ENCODE measurements at regions of chr14 and their contacts with region 1.

Region 1: GRCh38 chr14:64800000-64800399 is 79.7 kb downstream of the SPTB start:
- DNase-seq: peak; percentile 53 to 62
- ATAC-seq: peak; percentile 30 to 71; a peak in 4 of 6 replicates
- H3K4me3 ChIP-seq: no peak overlapping the region
- H3K27ac ChIP-seq: peak overlapping the region; percentile 15 to 32; a peak in 1 of 6 replicates
- H3K4me1 ChIP-seq: peaks cover 17% of the 10 kb centered on the region
- CTCF ChIP-seq: peak; percentile 55
- EP300 ChIP-seq: no peak
- POLR2A ChIP-seq: no peak
- RAD21 ChIP-seq: peak in 1 of 2 experiments; percentile 30; a peak in 2 of 5 replicates

Region 2: GRCh38 chr14:64671591-64671990 is 128.4 kb before region 1 on chr14:
- CTCF ChIA-PET with region 1: interaction called, 12 read pairs
- POLR2A ChIA-PET with region 1: no interaction called
- DNase-seq: peak; percentile 72 to 80
- ATAC-seq: peak; percentile 74 to 87; a peak in 5 of 6 replicates
- H3K4me3 ChIP-seq: no peak overlapping the region
- H3K27ac ChIP-seq: peak overlapping the region; percentile 75 to 79
- H3K4me1 ChIP-seq: peaks cover 37% of the 10 kb centered on the region
- CTCF ChIP-seq: peak; percentile 87
- EP300 ChIP-seq: no peak
- POLR2A ChIP-seq: no peak
- RAD21 ChIP-seq: peak; percentile 94

Region 3: DNA sequence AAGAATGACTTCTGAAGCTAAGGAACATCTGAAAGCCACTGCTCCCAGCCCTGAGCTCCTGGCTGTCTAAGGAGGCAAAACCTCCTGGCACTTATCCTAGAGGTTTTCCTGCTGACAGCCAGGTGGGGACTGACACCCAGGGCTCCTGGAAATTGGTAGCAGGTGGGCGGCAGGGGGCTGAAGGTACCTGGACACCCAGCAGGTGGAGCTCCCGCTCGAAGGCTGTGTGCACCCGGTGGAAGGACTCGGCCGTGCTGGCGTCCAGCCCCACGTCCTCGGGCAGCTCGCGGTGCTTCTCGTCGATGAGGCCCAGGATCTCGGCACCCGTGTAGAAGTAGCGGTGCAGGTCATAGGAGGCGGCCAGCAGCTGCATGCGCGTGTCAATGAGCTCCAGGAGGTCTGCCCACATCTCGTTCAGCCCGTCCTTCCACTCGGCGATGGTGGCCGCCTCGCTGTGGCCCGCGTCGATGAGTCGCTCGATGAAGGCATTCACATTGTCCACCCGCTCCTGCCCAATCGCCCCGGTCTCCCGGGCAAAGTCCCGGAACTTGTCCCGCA is 27.5 kb before region 1 on chr14:
- CTCF ChIA-PET with region 1: interaction called, 88 read pairs
- POLR2A ChIA-PET with region 1: interaction called, 3 read pairs
- DNase-seq: no peak
- ATAC-seq: peak in 1 of 2 experiments; percentile 54; a peak in 2 of 6 replicates
- H3K4me3 ChIP-seq: no peak overlapping the region
- H3K27ac ChIP-seq: no peak overlapping the region
- H3K4me1 ChIP-seq: no peaks in the 10 kb centered on the region
- CTCF ChIP-seq: peak; percentile 18; the same call in 1 of the 3 replicates
- EP300 ChIP-seq: no peak
- POLR2A ChIP-seq: no peak
- RAD21 ChIP-seq: peak in 1 of 2 experiments; percentile 21; a peak in 1 of 5 replicates

Region 4: DNA sequence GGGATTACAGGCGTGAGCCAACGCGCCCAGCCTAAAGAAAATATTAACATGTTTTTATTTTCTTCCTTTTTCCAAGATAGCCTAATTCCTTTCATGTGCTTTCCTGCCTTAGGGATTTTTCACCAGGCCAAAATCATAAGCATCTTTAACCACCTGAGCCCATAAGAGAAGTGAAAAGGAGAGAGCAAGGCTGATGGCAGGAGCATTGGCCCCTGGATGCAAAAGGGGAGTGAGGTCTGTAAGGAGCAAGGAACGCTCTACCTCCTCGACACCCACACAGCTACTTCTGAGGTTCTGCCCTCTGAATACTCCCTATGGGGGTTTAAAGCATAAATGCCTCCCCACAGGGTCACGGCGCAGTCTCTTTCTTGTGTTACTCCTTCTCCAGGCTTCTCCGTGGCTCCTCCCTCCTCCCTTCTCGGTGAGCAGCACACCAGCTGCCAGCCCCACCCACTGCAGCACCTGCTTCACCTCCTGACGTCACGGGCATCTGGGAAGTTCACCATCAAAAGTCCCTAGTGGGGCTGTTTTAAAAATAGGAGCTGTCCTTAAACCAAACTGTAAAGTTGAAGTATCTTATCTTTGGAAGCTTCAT is 12.3 kb after region 1 on chr14:
- CTCF ChIA-PET with region 1: interaction called, 32 read pairs
- POLR2A ChIA-PET with region 1: no interaction called
- DNase-seq: no peak
- ATAC-seq: peak in 1 of 2 experiments; percentile 35; a peak in 1 of 6 replicates
- H3K4me3 ChIP-seq: no peak overlapping the region
- H3K27ac ChIP-seq: peak overlapping the region in 1 of 2 experiments; percentile 44; a peak in 3 of 6 replicates
- H3K4me1 ChIP-seq: peaks cover 21% of the 10 kb centered on the region
- CTCF ChIP-seq: no peak
- EP300 ChIP-seq: no peak
- POLR2A ChIP-seq: no peak
- RAD21 ChIP-seq: no peak

Region 5: GRCh38 chr14:64835431-64835830 is 35.4 kb after region 1 on chr14:
- CTCF ChIA-PET with region 1: interaction called, 26 read pairs
- POLR2A ChIA-PET with region 1: no interaction called
- DNase-seq: no peak
- ATAC-seq: no peak
- H3K4me3 ChIP-seq: no peak overlapping the region
- H3K27ac ChIP-seq: no peak overlapping the region
- H3K4me1 ChIP-seq: no peaks in the 10 kb centered on the region
- CTCF ChIP-seq: no peak
- EP300 ChIP-seq: no peak
- POLR2A ChIP-seq: no peak
- RAD21 ChIP-seq: no peak

Region 6: DNA sequence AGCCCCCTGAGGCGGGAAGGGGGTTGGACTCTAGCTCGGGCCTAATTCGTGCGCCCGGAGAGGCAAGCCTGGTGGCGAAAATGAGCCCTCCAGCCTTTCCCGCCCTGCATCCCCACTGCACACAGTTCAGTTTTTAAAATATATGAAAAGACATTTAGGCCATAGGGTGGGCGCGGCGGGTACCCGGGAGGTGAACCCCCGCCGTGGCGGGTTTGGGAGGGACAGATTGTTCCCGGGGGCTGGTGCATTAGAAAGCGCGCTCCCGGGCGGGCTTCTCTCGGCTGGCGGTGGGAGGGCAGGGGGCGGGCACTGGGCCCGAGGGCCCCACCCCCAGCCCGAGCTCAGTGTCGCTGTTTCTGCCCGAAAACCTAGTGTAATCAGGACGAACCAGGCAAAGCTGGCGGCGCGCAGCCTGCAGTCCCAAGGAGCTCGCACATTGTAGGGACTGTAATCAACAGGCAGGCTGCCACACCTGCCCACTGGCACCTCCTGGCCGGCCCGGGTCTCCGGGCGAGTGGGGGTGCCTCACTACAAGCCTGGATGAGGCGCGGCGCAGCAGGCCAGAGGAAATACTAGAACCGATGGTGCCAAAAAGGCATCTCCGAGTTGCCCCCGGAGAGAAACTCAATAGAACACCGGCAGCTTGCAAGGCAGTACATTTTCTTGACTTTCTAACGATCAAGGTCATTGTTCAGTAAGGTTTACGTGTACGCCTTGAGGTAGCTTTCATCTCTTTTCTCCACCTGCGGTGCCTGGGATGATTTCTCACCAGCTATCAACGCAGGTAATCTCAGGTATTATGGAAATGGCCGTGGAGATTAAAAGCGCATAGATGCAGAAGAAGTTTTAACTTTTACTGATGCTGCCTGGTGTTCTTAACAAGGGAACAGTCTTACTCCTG is 80.5 kb after region 1 on chr14:
- CTCF ChIA-PET with region 1: interaction called, 22 read pairs
- POLR2A ChIA-PET with region 1: interaction called, 3 read pairs
- DNase-seq: peak; percentile 40 to 73
- ATAC-seq: peak; percentile 79 to 91
- H3K4me3 ChIP-seq: peak overlapping the region; percentile 85
- H3K27ac ChIP-seq: peak overlapping the region; percentile 65 to 82
- H3K4me1 ChIP-seq: no peaks in the 10 kb centered on the region
- CTCF ChIP-seq: no peak
- EP300 ChIP-seq: no peak
- POLR2A ChIP-seq: no peak
- RAD21 ChIP-seq: no peak

Region 7: DNA sequence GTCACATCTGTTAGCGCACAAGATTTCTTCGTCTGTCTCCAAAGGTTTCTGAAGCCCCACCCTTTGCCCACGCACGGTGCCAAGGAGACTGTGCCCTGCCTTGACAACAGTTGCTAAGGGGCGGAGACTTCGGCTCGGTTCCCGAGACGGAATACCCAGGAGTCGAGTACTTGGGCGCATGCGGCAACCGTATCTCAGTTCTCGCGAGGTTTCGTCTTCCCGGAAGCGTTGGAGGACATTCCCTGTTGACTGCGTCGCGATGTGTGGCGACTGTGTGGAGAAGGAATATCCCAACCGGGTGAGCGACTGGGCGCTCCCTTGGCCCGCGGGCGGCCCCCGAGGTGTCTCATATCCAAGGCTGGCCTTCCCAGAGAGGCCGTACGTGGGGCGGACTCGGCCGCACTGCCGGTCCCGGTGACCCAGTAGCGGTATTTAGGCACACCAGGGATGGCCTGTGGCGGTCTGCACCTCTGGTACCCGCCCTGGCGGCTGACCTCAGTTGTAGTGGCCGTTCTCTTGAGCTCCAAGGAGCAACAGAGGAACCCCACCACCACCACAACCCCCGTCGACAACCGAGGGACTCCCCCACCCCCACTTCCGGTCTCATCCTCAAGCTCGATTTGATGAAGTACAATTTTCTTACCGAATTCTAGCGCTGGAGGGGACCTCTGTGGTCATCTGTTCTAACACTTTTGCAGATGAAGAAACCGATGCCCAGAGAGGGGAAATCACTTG is 114.4 kb after region 1 on chr14 and contains the start of gene CHURC1:
- CTCF ChIA-PET with region 1: interaction called, 36 read pairs
- POLR2A ChIA-PET with region 1: interaction called, 4 read pairs
- DNase-seq: peak; percentile 92 to 99
- ATAC-seq: peak; percentile 97 to 99
- H3K4me3 ChIP-seq: peak within 1 kb of the TSS; percentile 98
- H3K27ac ChIP-seq: peak within 1 kb of the TSS; percentile 89 to 99
- H3K4me1 ChIP-seq: peaks cover 30% of the 10 kb centered on the region
- CTCF ChIP-seq: no peak
- EP300 ChIP-seq: no peak
- POLR2A ChIP-seq: peak; percentile 89
- RAD21 ChIP-seq: no peak
- polyA plus RNA-seq, gene CHURC1: 115 and 153 TPM in 2 replicates

Region 8: GRCh38 chr14:65044596-65044959 is 244.6 kb after region 1 on chr14:
- CTCF ChIA-PET with region 1: no interaction called
- POLR2A ChIA-PET with region 1: no interaction called
- DNase-seq: no peak
- ATAC-seq: no peak
- H3K4me3 ChIP-seq: no peak overlapping the region
- H3K27ac ChIP-seq: no peak overlapping the region
- H3K4me1 ChIP-seq: no peaks in the 10 kb centered on the region
- CTCF ChIP-seq: no peak
- EP300 ChIP-seq: no peak
- POLR2A ChIP-seq: no peak
- RAD21 ChIP-seq: no peak

Measured in A549 (cell line).